Right ventricle myocardium inferior (tissue), 1 donor: ENCODE measurements at regions of chr17 and their contacts with region 1.

Region 1: GRCh38 chr17:64145757-64146417 is 15.9 kb upstream of the ERN1 start:
- DNase-seq: peak; percentile 98
- ATAC-seq: peak; percentile 98

Region 2: DNA sequence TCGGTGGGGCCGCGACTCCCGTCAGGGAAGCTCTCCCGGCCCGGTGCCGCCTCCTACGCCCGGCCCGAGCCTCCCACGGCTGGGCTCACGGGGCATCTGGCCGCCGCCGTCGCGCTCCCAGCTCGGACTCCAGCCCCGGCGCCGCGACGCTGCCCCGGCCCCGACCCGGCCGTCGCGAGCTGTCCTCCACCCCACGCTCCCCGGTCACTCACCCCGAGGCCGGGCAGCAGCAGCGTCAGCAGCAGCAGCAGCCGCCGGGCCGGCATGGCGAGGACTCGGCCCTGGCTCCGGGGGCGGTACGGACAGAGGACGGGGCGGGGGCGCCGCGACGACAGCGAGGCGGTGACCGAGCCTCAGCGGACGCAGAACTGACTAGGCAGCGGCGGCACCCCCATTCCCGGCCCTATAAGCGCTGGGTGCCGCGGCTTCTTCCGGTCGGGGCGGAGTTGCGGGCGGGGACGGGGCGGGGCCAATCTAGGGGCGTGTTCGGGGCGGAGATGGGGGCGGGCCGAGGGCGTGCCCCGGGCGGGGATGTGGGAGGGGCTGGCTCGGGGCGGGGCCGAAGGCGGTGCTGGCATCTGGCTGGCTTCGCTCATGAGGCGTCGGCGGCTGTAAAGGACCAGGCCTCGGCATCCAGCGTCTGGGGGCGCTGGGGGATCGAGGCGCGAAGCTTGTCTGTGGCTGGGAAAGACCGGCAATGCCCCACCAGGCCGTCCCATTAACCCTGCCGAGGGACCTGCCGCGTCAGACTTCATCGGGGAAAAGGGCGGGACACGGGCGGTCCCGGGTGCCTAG is 15.9 kb before region 1 on chr17 and contains the start of gene ERN1:
- intact Hi-C with region 1: loop called (anchors 2 kb)
- DNase-seq: peak; percentile 98
- ATAC-seq: peak; percentile 98
- total RNA-seq, gene ERN1: 7.1 TPM

Region 3: GRCh38 chr17:64185141-64185540 is 39.3 kb after region 1 on chr17:
- intact Hi-C with region 1: loop called (anchors 5 kb)
- DNase-seq: no peak
- ATAC-seq: no peak

Region 4: DNA sequence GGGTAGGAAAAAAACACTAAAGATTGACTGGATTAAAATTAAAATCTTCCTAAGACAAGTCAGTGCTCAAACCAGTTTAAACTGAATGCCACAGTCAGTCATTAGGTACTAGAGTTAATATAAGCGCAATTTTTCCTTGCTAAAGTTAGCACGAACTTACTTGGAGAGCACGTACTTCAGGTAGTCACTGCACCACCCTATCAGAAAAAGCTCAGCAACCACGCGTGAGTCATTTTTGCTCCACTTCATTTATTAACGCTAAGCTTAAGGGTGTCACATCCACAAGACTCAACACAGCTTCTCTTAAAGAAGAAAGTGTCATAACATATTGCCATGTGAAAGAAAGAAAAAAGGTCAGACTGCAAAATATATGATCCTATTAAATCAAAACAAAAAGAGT is 64.1 kb after region 1 on chr17:
- intact Hi-C with region 1: loop called (anchors 5 kb)
- DNase-seq: no peak
- ATAC-seq: no peak

Region 5: GRCh38 chr17:64262417-64263260 is 116.8 kb after region 1 on chr17 and contains the start of gene TEX2:
- intact Hi-C with region 1: loop called (anchors 2 kb)
- DNase-seq: peak; percentile 88
- ATAC-seq: peak; percentile 55
- total RNA-seq, gene TEX2: 56.1 TPM

Region 6: GRCh38 chr17:64281962-64282727 is 136.3 kb after region 1 on chr17:
- intact Hi-C with region 1: loop called (anchors 1 kb)
- DNase-seq: peak; percentile 80
- ATAC-seq: peak; percentile 43

Region 7: DNA sequence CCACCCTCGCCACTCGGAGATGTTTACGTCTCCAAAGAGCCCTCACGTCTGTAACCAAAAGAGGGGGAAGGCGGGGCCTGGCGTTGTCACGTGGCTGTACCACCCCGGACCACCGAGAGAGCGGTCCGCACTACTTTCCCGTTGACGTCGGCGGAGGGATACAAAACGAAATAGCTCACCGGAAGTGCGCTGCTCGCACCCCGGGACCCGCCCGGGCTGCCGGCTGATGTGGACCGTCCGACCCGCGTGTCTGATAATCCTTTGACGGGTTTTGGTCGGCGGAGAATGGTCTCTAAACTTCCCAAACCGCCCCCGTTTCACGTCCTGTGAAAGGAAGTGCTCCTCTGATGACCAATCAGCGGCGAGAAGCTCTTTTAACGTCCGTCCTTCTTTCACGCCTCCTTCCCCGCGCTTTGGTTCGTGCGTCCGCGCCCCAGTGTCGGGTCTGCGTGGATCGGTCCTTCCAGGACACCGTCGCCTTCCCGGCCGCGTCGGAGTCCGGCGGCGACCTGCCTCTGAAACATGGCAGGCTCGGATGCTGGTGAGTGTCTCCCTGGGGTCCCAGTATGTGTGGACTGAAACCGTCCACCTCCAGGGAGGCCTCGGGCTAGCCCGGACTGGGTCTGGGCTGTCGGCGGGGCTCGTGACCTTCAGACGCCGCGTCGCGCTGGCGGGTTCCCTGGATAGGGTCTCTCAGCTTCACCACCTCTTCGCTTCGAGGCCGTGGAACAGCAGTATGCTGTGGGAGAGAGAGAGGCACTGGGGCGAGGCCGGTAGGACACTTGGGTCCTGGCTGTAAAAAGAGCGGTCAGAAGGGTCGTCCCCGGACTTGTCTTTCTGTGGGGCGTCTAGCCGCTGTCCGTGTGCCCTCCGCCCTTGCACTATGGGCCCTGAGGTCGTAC is 360.9 kb after region 1 on chr17 and contains the start of gene CEP95:
- intact Hi-C with region 1: loop called (anchors 2 kb)
- DNase-seq: peak; percentile 95
- ATAC-seq: peak; percentile 85
- total RNA-seq, gene CEP95: 14.7 TPM